BJ (cell line): ENCODE measurements at regions of chr5 and their contacts with region 1.

Region 1: DNA sequence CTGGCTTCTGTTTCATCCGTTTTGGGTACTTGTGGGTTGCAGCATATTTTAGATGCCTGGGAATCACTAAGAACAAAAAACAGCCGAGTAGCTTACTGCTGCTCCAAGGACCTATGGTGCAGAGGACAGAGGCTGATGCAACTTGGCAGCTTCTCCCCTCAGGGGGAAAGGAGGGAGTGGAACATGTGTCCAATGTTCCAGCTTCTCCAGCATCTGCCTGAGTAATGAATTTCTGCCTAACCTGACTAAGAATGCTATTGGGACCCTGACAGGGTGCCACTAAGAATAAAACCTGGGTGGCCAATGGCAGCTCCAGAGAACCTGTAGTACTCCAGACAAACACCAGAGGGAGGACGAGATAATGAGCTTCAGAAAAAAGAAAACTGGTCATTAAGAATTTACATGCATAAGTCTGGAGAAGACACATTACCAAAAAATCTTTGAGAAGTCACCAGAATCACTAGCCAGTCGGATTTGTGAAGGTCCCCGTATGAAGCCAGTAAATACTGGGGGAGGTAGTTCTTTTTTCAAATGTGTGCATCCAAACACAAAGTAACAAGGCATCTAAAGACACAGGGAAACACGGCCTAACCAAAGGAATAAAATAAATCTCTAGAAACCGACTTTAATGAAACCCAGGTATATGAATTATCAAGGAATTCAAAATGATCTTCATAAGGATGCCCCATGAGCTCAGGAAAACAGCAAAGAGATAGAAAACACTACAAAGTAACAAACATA is 293.5 kb downstream of the HINT1 start:
- DNase-seq: peak; percentile 52
- H3K4me3 ChIP-seq: no peak overlapping the region
- H3K27me3 ChIP-seq: no peaks in the 10 kb centered on the region
- CTCF ChIP-seq: peak; percentile 71

Region 2: GRCh38 chr5:130805648-130806047 is 65.9 kb before region 1 on chr5:
- CTCF ChIA-PET with region 1: no interaction called
- POLR2A ChIA-PET with region 1: no interaction called
- DNase-seq: no peak
- H3K4me3 ChIP-seq: no peak overlapping the region
- H3K27me3 ChIP-seq: no peaks in the 10 kb centered on the region
- CTCF ChIP-seq: no peak

Region 3: DNA sequence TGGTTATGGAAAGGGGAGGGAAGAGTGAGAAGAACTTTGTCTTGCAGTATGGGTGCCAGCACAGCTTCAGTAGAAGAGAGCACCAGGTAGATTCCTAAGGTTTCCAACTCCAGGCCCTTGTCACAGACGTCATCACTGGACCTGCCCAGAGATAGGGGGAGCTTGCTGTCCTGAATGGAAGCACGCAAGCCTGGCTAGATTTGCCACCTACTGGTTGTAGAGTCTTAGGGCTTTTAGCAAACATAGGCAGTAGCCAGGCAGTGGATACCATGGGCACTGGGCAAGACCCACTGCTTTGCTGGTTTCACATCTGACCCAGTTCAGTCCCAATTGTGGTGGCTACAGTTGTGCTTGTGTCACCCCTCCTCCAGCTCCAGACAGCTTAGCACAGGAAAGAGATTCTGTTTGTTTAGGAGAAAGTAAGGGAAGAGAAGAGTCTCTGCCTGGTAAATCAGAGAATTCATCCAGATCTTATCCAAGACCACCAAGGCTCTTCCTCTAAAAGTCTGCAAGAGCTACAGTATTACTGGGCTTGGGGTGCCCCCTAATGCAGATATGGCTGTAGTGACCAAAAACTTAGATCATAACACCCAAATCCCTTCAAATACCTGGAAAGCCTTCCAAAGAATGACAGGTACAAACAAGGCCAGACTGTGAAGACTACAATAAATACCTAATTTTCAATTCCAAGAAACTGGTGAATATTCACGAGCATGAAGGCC is 134.6 kb after region 1 on chr5:
- CTCF ChIA-PET with region 1: interaction called, 24 read pairs
- POLR2A ChIA-PET with region 1: no interaction called
- DNase-seq: no peak
- H3K4me3 ChIP-seq: no peak overlapping the region
- H3K27me3 ChIP-seq: no peaks in the 10 kb centered on the region
- CTCF ChIP-seq: no peak

Region 4: GRCh38 chr5:131109540-131110255 is 238.2 kb after region 1 on chr5:
- CTCF ChIA-PET with region 1: interaction called, 26 read pairs
- POLR2A ChIA-PET with region 1: no interaction called
- DNase-seq: peak; percentile 2
- H3K4me3 ChIP-seq: no peak overlapping the region
- H3K27me3 ChIP-seq: no peaks in the 10 kb centered on the region
- CTCF ChIP-seq: peak; percentile 70